CD14-positive monocyte (primary cell): ENCODE measurements at regions of chr6 and their contacts with region 1.

Region 1: GRCh38 chr6:37691904-37692806 is 5.5 kb downstream of the MDGA1 start:
- DNase-seq: peak; percentile 34 to 57 (median 48)
- H3K4me3 ChIP-seq: no peak overlapping the region
- H3K4me3 Mint-ChIP-seq: peak overlapping the region in 1 of 2 donors; percentile 67
- H3K27ac ChIP-seq: no peak overlapping the region
- H3K27ac Mint-ChIP-seq: no peak overlapping the region
- H3K4me1 ChIP-seq: peaks cover 10 to 12% of the 10 kb centered on the region in 2 donors
- H3K4me1 Mint-ChIP-seq: peaks cover 15% of the 10 kb centered on the region
- H3K27me3 ChIP-seq: peaks cover 35 to 48% of the 10 kb centered on the region in 2 donors
- H3K27me3 Mint-ChIP-seq: peaks cover 50 to 75% (median 62%) of the 10 kb centered on the region in 3 donors
- CTCF ChIP-seq: peak; percentile 97

Region 2: DNA sequence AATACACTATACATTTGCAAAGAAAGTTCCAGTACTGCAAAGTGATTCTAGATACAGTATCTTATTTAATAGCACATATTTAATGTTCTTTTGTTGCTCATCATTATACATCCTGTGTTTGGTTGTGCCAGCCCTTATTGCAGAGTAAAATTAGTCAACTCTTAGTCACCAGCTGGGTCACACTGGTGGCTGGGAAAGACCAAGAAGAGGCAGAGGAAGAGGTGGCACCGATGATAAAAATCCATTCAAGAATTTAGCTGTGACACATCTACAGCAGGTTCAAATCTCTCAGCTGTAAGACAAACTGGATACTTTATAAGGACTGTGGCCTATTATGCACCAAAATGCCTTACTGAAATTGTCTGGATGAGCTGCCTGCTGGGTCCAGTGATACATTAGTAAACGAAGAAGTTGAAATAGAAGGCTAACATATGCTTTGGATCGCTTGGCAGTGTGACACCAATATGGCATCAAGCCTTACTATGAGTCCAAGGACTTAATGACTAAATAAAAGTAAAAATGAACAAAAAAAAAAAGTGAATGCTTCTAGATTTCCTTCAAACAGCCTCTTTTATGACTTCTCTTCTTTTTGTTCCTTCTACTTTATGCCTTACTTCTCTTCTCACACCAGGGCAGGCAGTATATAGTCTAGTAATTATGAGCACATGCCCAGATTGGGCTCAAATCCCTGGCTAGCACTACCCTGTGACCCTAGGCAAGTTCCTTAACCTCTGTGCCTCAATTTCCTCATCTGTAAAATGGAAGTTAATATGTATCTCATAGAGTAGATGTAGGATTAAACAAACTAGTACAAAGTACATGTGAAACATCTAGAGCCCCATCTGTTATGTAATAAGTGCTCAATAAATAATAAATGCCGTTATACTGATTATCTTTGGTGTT is 367.8 kb before region 1 on chr6:
- intact Hi-C with region 1: loop called (anchors 5 kb)
- DNase-seq: peak in 1 of 3 donors; percentile 18
- H3K4me3 ChIP-seq: no peak overlapping the region
- H3K4me3 Mint-ChIP-seq: no peak overlapping the region
- H3K27ac ChIP-seq: no peak overlapping the region
- H3K27ac Mint-ChIP-seq: peak overlapping the region in 2 of 7 donors; percentile 37 to 66
- H3K4me1 ChIP-seq: no peaks in the 10 kb centered on the region
- H3K4me1 Mint-ChIP-seq: no peaks in the 10 kb centered on the region
- H3K27me3 ChIP-seq: no peaks in the 10 kb centered on the region
- H3K27me3 Mint-ChIP-seq: no peaks in the 10 kb centered on the region
- CTCF ChIP-seq: no peak

Region 3: DNA sequence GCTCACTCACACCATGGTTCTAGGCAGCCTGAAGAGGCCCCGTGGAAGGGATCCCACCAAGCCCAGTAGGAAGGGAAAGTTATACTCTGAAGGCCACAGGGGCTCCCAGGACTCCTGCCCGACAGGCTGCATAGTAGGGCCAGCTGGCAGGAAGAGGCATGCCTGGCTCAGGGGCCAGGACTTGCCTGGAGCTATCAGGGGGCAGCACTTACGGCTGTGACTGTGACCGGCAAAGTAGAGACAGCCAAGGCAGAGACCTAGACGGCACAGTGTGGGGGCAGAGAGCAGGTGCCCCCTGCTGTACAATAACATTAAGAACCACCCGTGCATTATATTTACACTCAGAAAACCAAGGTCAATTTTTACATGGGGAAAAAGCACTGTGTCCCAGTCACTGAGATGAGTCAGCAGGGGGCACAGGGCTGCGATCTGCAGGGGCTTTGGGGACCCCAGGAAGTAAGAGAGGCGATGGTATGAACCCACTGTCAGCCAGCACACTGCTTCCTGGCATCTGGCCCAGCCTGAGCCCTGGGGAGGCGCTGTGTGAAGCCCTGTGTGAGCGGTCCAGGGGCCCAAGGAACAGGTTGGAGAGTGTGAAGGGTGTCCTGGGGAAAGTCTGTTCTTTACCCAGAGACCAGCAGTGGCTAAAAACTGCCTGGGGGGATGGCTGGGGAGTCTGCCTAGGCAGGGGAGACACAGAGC is 202.3 kb before region 1 on chr6:
- intact Hi-C with region 1: loop called (anchors 2 to 5 kb)
- DNase-seq: no peak
- H3K4me3 ChIP-seq: no peak overlapping the region
- H3K4me3 Mint-ChIP-seq: no peak overlapping the region
- H3K27ac ChIP-seq: no peak overlapping the region
- H3K27ac Mint-ChIP-seq: peak overlapping the region in 3 of 7 donors; percentile 12 to 38 (median 15)
- H3K4me1 ChIP-seq: no peaks in the 10 kb centered on the region
- H3K4me1 Mint-ChIP-seq: no peaks in the 10 kb centered on the region
- H3K27me3 ChIP-seq: no peaks in the 10 kb centered on the region
- H3K27me3 Mint-ChIP-seq: peaks cover 2 to 4% (median 3%) of the 10 kb centered on the region in 3 donors
- CTCF ChIP-seq: no peak

Region 4: GRCh38 chr6:38493931-38494547 is 801.9 kb after region 1 on chr6:
- intact Hi-C with region 1: loop called in 1 of 2 experiments (anchors 10 kb)
- DNase-seq: peak; percentile 43 to 61 (median 60)
- H3K4me3 ChIP-seq: no peak overlapping the region
- H3K4me3 Mint-ChIP-seq: no peak overlapping the region
- H3K27ac ChIP-seq: no peak overlapping the region
- H3K27ac Mint-ChIP-seq: no peak overlapping the region
- H3K4me1 ChIP-seq: no peaks in the 10 kb centered on the region
- H3K4me1 Mint-ChIP-seq: no peaks in the 10 kb centered on the region
- H3K27me3 ChIP-seq: no peaks in the 10 kb centered on the region
- H3K27me3 Mint-ChIP-seq: no peaks in the 10 kb centered on the region
- CTCF ChIP-seq: peak; percentile 98